Activated naive CD4-positive, alpha-beta T cell treated with anti-CD3 and anti-CD28 coated beads, Interleukin-2, amount 10 ng/mL, durations not matched to agents 7 days and 5 days (primary cell): ENCODE measurements at regions of chr2 and their contacts with region 1.

Region 1: GRCh38 chr2:171086352-171087290 is 74.1 kb downstream of the TLK1 start:
- DNase-seq: peak; percentile 71
- H3K4me3 Mint-ChIP-seq: peak overlapping the region; percentile 75
- H3K27ac Mint-ChIP-seq: peak overlapping the region; percentile 90
- H3K4me1 Mint-ChIP-seq: peaks cover 61% of the 10 kb centered on the region
- H3K27me3 Mint-ChIP-seq: no peaks in the 10 kb centered on the region

Region 2: DNA sequence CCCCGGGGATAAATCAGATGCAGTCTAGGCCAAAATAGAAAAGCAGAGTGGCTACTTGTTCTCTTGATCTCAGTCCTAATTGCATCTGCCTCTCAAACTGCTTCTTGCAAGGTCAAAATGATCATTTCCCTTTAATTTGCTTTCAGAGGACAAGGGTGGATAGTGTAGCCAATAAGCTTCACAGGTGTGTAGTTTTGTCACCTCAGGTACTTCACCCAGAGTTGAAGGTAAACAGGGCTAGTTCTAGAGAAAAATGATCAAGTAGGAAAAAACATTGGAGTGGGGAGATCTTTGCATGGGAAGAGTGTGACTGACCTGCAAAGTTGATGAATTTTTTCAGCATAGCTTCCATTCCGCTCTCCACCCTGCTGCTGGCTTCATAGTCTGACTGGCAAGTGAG is 307.7 kb before region 1 on chr2:
- CTCF ChIA-PET with region 1: no interaction called
- DNase-seq: no peak
- H3K4me3 Mint-ChIP-seq: no peak overlapping the region
- H3K27ac Mint-ChIP-seq: no peak overlapping the region
- H3K4me1 Mint-ChIP-seq: no peaks in the 10 kb centered on the region
- H3K27me3 Mint-ChIP-seq: peaks cover 30% of the 10 kb centered on the region

Region 3: GRCh38 chr2:170928824-170929685 is 157.6 kb before region 1 on chr2 and contains the start of gene GORASP2:
- CTCF ChIA-PET with region 1: interaction called, 10 read pairs
- DNase-seq: peak; percentile 99
- H3K4me3 Mint-ChIP-seq: peak within 1 kb of the TSS; percentile 94
- H3K27ac Mint-ChIP-seq: peak within 1 kb of the TSS; percentile 97
- H3K4me1 Mint-ChIP-seq: peaks cover 40% of the 10 kb centered on the region
- H3K27me3 Mint-ChIP-seq: peaks cover 6% of the 10 kb centered on the region

Region 4: DNA sequence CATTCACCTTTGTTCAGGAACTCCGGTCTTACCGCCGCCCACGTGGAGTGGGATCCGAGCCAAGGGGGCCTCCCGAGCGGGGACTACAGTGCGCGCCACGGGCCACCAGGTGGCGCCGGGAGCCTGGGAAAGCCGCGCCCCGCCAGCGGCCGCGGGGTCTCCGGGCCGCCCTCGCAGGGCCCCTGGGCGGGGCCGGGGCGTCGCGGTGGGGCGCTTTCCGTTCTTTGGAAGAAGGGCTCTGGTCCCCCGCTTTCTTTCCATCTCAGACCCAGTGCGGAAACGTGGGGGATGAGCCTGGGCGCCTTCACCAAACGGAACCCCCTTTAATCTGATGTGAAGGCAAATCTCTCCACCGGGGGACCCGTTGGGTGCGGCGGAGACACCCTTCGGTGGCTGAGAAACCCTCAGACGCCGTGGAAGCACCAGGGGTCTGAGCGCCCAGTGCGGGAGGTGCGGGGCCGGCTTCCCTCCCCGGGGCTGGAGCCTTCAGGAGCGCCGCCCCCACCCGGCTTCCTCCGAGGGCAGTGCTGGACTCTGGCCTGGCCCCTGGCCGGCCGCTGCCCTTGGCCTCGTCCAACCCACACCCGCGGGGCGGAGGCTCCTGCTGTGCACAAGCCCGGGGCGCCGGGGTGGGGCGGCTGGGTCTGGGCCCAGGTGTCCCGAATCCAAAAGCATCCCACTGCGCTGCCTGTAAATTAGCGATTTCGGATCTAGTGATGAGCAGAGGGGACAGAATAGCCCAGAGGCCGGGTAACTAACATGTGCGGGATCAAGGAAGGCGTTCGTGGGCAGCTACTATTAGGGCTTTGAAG is 112.9 kb before region 1 on chr2:
- CTCF ChIA-PET with region 1: interaction called, 24 read pairs
- DNase-seq: peak; percentile 83
- H3K4me3 Mint-ChIP-seq: peak overlapping the region; percentile 74
- H3K27ac Mint-ChIP-seq: peak overlapping the region; percentile 2
- H3K4me1 Mint-ChIP-seq: peaks cover 15% of the 10 kb centered on the region
- H3K27me3 Mint-ChIP-seq: peaks cover 6% of the 10 kb centered on the region

Region 5: GRCh38 chr2:171098607-171099006 is 12.0 kb after region 1 on chr2:
- CTCF ChIA-PET with region 1: interaction called, 14 read pairs
- DNase-seq: no peak
- H3K4me3 Mint-ChIP-seq: no peak overlapping the region
- H3K27ac Mint-ChIP-seq: no peak overlapping the region
- H3K4me1 Mint-ChIP-seq: peaks cover 19% of the 10 kb centered on the region
- H3K27me3 Mint-ChIP-seq: no peaks in the 10 kb centered on the region

Region 6: DNA sequence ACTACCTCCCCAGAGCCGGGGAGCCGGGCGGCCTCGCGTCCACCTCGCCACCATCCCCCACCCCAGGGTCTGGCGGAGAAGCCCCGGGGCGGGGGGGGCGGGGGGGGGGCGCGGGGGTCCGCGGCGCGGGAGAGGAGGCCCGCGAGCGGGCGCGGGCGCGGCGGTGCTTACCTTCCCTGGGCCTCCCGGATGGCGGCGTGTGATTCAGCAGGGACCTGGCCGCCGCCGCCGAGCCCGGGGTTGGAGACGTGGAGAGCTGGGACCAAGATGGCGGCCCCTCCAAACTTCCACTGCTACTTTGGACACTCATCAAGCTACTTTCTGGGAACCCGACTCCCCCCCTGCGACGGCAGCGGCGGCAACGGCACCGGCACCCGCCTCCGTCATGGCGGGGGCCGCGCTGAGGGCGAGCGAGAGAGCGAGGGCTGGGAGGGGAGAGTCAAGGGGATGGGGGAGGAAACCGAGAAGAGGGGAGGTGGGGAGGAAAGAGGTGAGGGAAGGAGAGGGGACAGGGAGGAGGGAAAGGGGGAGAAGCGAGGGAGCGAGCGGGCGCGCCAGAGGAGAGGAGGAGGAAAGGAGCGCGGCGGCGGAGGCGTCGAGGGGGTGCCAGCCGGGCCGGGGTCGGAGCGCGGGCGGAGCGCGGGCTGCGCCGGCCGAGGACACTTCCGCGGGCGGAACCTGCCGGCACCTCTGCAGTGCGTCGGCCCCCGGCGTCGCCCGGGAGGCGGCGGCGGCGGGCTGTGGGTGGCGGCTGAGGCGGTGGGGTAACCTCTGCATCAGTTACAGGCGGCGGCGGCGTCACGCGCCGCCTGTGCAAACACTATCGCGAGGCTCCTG is 73.7 kb after region 1 on chr2 and contains the start of gene TLK1:
- CTCF ChIA-PET with region 1: interaction called, 17 read pairs
- DNase-seq: peak; percentile 85
- H3K4me3 Mint-ChIP-seq: peak within 1 kb of the TSS; percentile 99
- H3K27ac Mint-ChIP-seq: peak within 1 kb of the TSS; percentile 98
- H3K4me1 Mint-ChIP-seq: peaks cover 66% of the 10 kb centered on the region
- H3K27me3 Mint-ChIP-seq: no peaks in the 10 kb centered on the region